ENCODE measurements at regions of chr4 and their contacts with region 1.

Region 1: DNA sequence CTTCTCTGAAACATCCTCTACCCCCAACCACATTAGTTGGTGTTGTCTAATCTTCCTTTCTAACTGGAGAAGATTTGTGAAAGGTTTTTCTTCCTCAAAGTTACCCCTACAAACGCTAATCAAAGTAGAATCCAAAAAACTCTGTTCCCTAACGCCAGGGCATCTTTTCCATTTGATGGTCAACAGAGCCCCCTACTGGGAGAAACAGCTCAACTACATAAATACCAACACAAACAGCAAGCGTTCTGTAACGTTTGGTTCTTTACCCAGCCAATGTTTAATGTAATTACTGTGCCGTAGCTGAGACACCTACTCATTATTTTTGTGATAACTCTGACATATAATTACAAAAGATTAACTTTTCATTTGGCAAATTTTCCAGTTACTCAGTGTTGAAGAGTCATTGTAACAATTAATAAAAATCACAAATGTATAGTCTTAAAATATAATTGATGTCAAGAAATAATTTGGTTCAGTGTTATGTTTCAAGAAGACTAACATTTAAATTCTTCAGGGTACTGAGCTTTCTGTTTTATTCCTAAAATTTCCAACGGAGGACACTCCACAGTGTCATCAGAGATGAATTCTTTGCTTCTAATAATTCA is 94.9 kb upstream of the TBC1D9 start:
- DNase-seq: peak; percentile 84
- ATAC-seq: peak; percentile 91
- H3K4me3 ChIP-seq: no peak overlapping the region
- H3K4me3 Mint-ChIP-seq: no peak overlapping the region
- H3K27ac ChIP-seq: peak overlapping the region in 1 of 2 donors; percentile 11
- H3K27ac Mint-ChIP-seq: peak overlapping the region; percentile 33
- H3K4me1 ChIP-seq: peaks cover 18 to 25% of the 10 kb centered on the region in 2 donors
- H3K4me1 Mint-ChIP-seq: peaks cover 26% of the 10 kb centered on the region
- H3K27me3 ChIP-seq: no peaks in the 10 kb centered on the region
- H3K27me3 Mint-ChIP-seq: no peaks in the 10 kb centered on the region
- CTCF ChIP-seq: peak; percentile 98

Region 2: GRCh38 chr4:140595065-140595464 is 256.1 kb before region 1 on chr4:
- CTCF ChIA-PET with region 1: interaction called, 8 read pairs
- POLR2A ChIA-PET with region 1: no interaction called
- intact Hi-C with region 1: loop called (anchors 1 kb)
- DNase-seq: peak; percentile 53
- ATAC-seq: peak; percentile 73
- H3K4me3 ChIP-seq: no peak overlapping the region
- H3K4me3 Mint-ChIP-seq: no peak overlapping the region
- H3K27ac ChIP-seq: no peak overlapping the region
- H3K27ac Mint-ChIP-seq: no peak overlapping the region
- H3K4me1 ChIP-seq: no peaks in the 10 kb centered on the region
- H3K4me1 Mint-ChIP-seq: no peaks in the 10 kb centered on the region
- H3K27me3 ChIP-seq: peaks cover 0 to 8% (median 4%) of the 10 kb centered on the region in 4 experiments
- H3K27me3 Mint-ChIP-seq: peaks cover 45% of the 10 kb centered on the region
- CTCF ChIP-seq: peak; percentile 62

Region 3: GRCh38 chr4:140673729-140674128 is 177.4 kb before region 1 on chr4:
- CTCF ChIA-PET with region 1: interaction called, 13 read pairs
- POLR2A ChIA-PET with region 1: no interaction called
- intact Hi-C with region 1: no loop called
- DNase-seq: no peak
- ATAC-seq: no peak
- H3K4me3 ChIP-seq: no peak overlapping the region
- H3K4me3 Mint-ChIP-seq: no peak overlapping the region
- H3K27ac ChIP-seq: no peak overlapping the region
- H3K27ac Mint-ChIP-seq: no peak overlapping the region
- H3K4me1 ChIP-seq: peaks cover 12 to 13% of the 10 kb centered on the region in 2 donors
- H3K4me1 Mint-ChIP-seq: peaks cover 18% of the 10 kb centered on the region
- H3K27me3 ChIP-seq: no peaks in the 10 kb centered on the region
- H3K27me3 Mint-ChIP-seq: no peaks in the 10 kb centered on the region
- CTCF ChIP-seq: no peak

Region 4: GRCh38 chr4:140743194-140743931 is 107.8 kb before region 1 on chr4:
- CTCF ChIA-PET with region 1: interaction called, 26 read pairs
- POLR2A ChIA-PET with region 1: interaction called, 3 read pairs
- intact Hi-C with region 1: loop called (anchors 1 kb)
- DNase-seq: peak; percentile 83
- ATAC-seq: peak; percentile 72
- H3K4me3 ChIP-seq: peak overlapping the region; percentile 7 to 59 (median 31)
- H3K4me3 Mint-ChIP-seq: peak overlapping the region; percentile 82
- H3K27ac ChIP-seq: peak overlapping the region; percentile 89 to 91
- H3K27ac Mint-ChIP-seq: peak overlapping the region; percentile 94
- H3K4me1 ChIP-seq: peaks cover 71 to 76% of the 10 kb centered on the region in 2 donors
- H3K4me1 Mint-ChIP-seq: peaks cover 87% of the 10 kb centered on the region
- H3K27me3 ChIP-seq: no peaks in the 10 kb centered on the region
- H3K27me3 Mint-ChIP-seq: no peaks in the 10 kb centered on the region
- CTCF ChIP-seq: peak; percentile 59

Region 5: DNA sequence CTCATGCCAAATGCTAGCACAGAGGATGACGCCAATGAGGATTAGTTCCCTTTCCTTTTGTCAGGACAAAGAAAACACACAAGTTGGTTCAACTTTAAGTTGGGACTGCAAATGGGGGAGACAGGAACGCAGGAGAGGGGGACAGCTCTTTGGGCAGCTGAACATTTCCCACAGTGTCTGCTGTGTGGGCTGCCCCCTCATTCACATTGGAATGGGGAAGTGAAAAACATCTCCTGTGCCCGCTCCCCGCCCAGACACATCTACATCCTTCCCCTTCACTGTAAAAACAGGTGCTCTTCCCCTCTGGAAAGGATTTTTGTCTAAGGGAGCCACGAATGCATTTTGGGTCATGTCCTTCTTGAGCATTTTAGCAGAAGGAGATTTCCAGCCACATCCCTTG is 50.5 kb before region 1 on chr4:
- CTCF ChIA-PET with region 1: interaction called, 18 read pairs
- POLR2A ChIA-PET with region 1: no interaction called
- intact Hi-C with region 1: no loop called
- DNase-seq: peak; percentile 69
- ATAC-seq: peak; percentile 77
- H3K4me3 ChIP-seq: peak overlapping the region in 1 of 5 experiments; percentile 1
- H3K4me3 Mint-ChIP-seq: peak overlapping the region; percentile 73
- H3K27ac ChIP-seq: peak overlapping the region; percentile 52 to 60
- H3K27ac Mint-ChIP-seq: peak overlapping the region; percentile 81
- H3K4me1 ChIP-seq: peaks cover 71 to 82% of the 10 kb centered on the region in 2 donors
- H3K4me1 Mint-ChIP-seq: peaks cover 85% of the 10 kb centered on the region
- H3K27me3 ChIP-seq: no peaks in the 10 kb centered on the region
- H3K27me3 Mint-ChIP-seq: no peaks in the 10 kb centered on the region
- CTCF ChIP-seq: no peak

Region 6: DNA sequence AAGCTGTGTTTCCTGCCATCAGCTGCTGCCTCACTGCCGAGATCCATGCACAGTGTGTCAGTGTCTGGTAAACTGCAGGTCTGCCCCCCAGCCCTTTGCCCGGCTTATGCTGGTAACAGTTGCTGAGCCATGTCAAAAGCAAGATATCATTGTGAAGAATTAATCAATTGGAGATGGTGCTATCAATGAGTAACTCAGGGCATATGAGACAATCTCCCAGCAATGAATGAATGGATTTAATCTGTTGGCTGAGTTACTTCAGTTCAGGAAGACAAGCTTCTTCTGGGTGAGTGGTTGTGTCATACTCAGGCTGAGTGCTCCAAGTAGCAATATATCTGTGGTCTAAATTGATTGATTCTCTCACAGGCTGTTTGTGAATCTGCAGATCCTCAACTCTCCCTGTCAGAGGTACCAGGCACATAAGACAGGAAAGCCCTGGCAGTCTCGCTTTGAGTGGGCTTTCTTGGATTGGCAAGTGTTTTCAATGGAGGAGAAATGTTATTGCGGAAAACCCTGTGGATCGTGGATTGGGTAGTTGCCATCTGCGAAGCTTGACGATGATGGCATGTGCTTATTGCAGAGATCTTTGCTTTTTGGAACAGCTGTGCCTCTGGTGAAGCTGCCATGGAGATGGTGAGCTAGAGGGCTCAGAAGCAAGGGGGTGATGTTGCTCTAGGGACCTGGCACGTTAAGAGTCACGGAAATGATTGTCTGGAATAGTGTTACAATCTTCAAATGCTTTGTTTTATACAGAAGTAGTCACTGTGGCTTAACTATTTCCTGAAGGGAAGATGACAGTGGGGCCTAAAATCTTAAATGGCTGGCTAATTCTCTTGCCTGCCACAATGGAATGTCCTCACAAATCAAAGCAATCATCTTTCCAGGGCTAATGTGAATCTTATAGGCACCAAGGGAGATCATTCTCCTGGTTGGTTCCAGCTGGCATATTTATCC is 52.7 kb after region 1 on chr4:
- CTCF ChIA-PET with region 1: no interaction called
- POLR2A ChIA-PET with region 1: no interaction called
- intact Hi-C with region 1: no loop called
- DNase-seq: no peak
- ATAC-seq: no peak
- H3K4me3 ChIP-seq: no peak overlapping the region
- H3K4me3 Mint-ChIP-seq: no peak overlapping the region
- H3K27ac ChIP-seq: no peak overlapping the region
- H3K27ac Mint-ChIP-seq: no peak overlapping the region
- H3K4me1 ChIP-seq: no peaks in the 10 kb centered on the region
- H3K4me1 Mint-ChIP-seq: no peaks in the 10 kb centered on the region
- H3K27me3 ChIP-seq: no peaks in the 10 kb centered on the region
- H3K27me3 Mint-ChIP-seq: peaks cover 31% of the 10 kb centered on the region
- CTCF ChIP-seq: no peak

Measured in B cell (primary cell).